Heart left ventricle (tissue), 16 donors: ENCODE measurements at regions of chr12 and their contacts with region 1.

Region 1: DNA sequence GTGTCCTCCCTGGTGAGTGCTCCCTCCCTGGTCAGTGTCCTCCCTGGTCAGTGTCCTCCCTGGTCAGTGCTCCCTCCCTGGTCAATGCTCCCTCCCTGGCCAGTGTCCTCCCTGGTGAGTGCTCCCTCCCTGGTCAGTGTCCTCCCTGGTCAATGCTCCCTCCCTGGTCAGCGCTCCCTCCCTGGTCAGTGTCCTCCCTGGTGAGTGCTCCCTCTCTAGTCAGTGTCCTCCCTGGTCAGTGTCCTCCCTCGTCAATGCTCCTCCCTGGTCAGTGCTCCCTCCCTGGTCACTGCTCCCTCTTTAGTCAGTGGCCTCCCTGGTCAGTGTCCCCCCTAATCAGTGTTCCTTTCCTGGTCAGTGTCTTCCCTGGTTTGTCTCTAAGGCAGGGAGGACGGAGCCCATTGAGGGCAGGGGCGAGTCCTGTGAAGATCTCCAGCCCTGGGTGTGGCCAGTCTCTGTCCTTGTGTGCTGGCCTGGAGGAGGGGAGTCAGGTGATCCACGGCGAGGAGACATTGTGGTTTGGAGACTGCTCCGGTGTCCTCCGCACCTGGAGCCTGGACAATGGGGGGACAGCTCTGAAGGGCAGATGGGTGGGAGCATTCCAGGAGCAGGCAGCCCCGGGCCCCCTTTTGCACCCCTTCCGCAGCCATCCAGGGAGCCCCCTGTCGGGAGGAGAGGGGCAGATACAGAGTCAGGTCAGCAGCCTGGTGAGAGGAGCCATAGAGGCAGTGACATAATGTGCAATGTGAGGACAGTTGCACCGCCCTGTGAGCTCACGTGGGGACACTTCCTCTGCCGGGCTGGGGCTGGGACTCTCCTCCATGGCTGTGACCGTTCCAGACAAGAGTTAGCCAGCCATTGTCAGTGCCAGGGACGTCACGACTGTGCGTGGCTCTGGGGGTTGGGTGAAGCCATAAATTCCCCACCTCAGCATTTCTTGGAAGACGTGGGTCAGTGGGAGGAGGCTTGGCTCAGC is 93.4 kb downstream of the ADGRD1 start:
- DNase-seq: peak; percentile 61 to 77 (median 72)
- ATAC-seq: peak; percentile 50 to 79 (median 54)
- H3K4me3 ChIP-seq: no peak overlapping the region
- H3K27ac ChIP-seq: peak overlapping the region in 9 of 12 donors; percentile 60 to 93 (median 81)
- H3K4me1 ChIP-seq: peaks cover 4 to 37% (median 26%) of the 10 kb centered on the region in 12 donors
- H3K27me3 ChIP-seq: no peaks in the 10 kb centered on the region
- CTCF ChIP-seq: peak in 2 of 12 donors; percentile 7 to 14
- POLR2A ChIP-seq: no peak

Region 2: DNA sequence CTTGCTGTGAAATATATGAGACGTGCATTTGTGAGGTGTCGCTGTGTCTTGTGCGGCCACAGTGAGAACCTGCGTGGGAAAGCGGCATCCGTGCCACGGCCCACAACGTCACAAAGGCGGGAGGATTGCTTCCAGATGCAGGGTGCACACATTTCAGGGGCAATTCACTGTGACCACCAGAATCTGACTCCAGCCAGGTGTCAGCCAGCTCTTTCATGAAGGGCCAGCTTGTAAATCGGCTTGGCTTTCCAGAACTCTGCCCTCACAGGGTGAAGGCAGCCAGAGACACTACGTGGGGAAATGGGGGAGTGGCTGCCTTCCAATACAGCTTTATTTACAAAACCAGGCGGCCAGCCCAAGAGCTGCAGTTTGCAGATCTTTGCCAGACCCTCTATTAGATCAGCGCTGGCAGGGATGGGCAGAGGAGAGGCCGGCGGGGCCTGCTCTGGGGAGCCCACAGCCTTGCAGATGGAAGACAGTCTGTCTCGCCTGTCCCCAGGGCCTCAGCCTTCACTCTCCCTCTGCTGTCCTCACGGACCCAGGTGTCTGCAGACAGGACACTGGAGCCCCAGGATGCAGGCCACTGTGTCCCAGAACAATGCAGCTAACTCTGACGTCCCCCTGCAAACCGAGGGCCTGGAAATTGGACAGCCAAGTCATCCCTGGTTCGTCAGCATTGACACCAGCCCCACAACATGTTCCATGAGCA is 39.9 kb before region 1 on chr12:
- intact Hi-C with region 1: no loop called
- DNase-seq: peak in 4 of 5 donors; percentile 57 to 86 (median 70)
- ATAC-seq: peak; percentile 69 to 87 (median 86)
- H3K4me3 ChIP-seq: no peak overlapping the region
- H3K27ac ChIP-seq: peak overlapping the region in 11 of 12 donors; percentile 27 to 80 (median 63)
- H3K4me1 ChIP-seq: peaks cover 0 to 40% (median 16%) of the 10 kb centered on the region in 12 donors
- H3K27me3 ChIP-seq: no peaks in the 10 kb centered on the region
- CTCF ChIP-seq: no peak
- POLR2A ChIP-seq: no peak

Region 3: DNA sequence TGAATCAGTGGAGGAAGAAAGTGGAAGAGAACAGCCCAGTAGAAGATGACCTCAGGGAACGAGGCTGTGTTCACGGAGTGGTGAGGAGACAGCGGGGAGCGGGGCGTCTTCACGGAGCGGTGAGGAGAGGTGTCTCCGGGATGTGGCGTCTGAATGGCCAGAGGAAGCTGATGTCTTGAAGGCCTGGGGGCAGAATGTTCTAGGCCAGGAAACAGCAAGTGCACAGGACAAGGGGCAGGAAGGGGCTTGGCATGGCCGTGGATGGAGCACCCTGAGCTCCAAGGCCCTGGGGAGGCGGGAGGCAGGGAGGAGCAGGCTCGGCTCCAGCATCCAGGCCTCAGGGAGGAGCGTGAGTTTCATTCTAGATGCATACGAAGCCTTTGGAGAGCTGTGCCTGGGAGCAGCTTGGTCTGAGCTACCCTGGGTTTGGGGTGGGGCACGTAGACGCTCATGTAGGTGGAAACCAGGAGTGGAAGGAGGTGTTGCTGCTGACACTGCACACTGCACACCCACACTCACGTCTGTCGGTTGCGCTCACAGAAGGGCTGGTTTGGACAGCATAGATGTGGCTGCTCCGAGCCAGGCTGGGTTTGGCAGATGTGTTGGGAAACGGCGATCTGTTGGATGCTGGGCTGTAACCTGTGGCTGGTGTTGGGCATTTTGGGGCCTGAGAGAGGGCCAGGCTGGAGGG is 38.2 kb after region 1 on chr12:
- intact Hi-C with region 1: loop called in 1 of 10 experiments (anchors 5 kb)
- DNase-seq: peak in 3 of 5 donors; percentile 35 to 53 (median 46)
- ATAC-seq: peak; percentile 45 to 75 (median 60)
- H3K4me3 ChIP-seq: no peak overlapping the region
- H3K27ac ChIP-seq: peak overlapping the region in 4 of 12 donors; percentile 20 to 38 (median 24)
- H3K4me1 ChIP-seq: peaks cover 0 to 14% (median 4%) of the 10 kb centered on the region in 12 donors
- H3K27me3 ChIP-seq: no peaks in the 10 kb centered on the region
- CTCF ChIP-seq: no peak
- POLR2A ChIP-seq: no peak

Region 4: DNA sequence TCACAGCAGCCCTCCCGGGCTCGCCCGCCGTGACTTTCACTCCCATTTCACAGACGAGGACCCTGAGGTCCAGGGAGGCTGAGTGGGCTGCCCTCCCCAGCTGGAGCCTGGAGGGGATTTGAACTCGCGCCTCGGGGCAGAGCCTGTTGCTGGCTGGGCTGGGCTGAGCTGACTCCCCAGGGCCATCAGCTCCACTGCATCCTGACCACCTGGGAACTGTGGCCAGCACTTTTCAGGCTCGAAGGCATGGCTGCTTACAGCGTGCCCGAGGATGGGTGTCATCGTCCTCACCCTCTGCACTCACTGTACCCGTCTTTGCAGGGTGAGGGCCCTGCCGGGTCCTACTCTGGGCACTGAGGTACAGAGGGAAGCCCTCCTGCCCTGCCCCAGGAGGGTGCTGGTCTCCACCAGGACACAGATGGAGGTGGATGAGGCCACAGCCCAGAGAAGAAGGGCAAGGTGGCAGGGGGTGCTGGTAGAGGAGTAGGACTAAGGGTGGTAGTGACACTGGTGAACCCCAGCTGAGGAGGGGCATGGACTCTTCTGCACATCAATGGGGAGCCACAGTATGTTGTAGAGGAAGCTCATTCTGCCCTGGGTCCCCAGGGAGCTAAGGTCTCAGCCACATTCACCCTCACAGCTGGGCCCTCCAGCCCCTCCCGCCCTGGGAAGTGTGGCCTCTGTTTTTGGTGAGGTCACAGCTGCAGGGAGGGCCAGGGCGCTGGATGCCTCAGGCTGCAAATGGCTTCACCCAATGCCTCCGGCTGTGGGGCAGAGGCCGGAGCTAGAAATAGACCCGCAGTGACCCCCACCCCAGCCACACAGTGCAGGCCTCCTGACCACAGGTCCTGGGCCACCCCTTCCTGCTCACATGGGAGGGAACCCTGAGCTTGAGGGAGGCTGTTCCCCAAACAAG is 298.7 kb after region 1 on chr12:
- intact Hi-C with region 1: no loop called
- DNase-seq: peak in 1 of 5 donors; percentile 63
- ATAC-seq: peak in 2 of 4 donors; percentile 17 to 29
- H3K4me3 ChIP-seq: no peak overlapping the region
- H3K27ac ChIP-seq: no peak overlapping the region
- H3K4me1 ChIP-seq: no peaks in the 10 kb centered on the region
- H3K27me3 ChIP-seq: peaks cover 0 to 29% (median 0%) of the 10 kb centered on the region in 9 donors
- CTCF ChIP-seq: no peak
- POLR2A ChIP-seq: no peak